ENCODE measurements at regions of chr11 and their contacts with region 1.

Region 1: GRCh38 chr11:114295676-114296604 is at the start of gene NNMT:
- DNase-seq: peak in 1 of 2 donors; percentile 93
- H3K4me3 ChIP-seq: peak within 1 kb of the TSS; percentile 47 to 76
- H3K27ac ChIP-seq: peak within 1 kb of the TSS; percentile 97 to 99
- H3K4me1 ChIP-seq: peaks cover 3 to 33% of the 10 kb centered on the region in 2 donors
- H3K27me3 ChIP-seq: no peaks in the 10 kb centered on the region
- CTCF ChIP-seq: no peak
- total RNA-seq, gene NNMT: 1,040 TPM

Region 2: GRCh38 chr11:114036156-114036811 is 259.7 kb before region 1 on chr11:
- intact Hi-C with region 1: no loop called
- DNase-seq: peak; percentile 27 to 88
- H3K4me3 ChIP-seq: peak overlapping the region; percentile 57 to 59
- H3K27ac ChIP-seq: peak overlapping the region; percentile 77 to 87
- H3K4me1 ChIP-seq: peaks cover 0 to 26% of the 10 kb centered on the region in 2 donors
- H3K27me3 ChIP-seq: no peaks in the 10 kb centered on the region
- CTCF ChIP-seq: peak; percentile 88 to 91 (median 90)

Region 3: DNA sequence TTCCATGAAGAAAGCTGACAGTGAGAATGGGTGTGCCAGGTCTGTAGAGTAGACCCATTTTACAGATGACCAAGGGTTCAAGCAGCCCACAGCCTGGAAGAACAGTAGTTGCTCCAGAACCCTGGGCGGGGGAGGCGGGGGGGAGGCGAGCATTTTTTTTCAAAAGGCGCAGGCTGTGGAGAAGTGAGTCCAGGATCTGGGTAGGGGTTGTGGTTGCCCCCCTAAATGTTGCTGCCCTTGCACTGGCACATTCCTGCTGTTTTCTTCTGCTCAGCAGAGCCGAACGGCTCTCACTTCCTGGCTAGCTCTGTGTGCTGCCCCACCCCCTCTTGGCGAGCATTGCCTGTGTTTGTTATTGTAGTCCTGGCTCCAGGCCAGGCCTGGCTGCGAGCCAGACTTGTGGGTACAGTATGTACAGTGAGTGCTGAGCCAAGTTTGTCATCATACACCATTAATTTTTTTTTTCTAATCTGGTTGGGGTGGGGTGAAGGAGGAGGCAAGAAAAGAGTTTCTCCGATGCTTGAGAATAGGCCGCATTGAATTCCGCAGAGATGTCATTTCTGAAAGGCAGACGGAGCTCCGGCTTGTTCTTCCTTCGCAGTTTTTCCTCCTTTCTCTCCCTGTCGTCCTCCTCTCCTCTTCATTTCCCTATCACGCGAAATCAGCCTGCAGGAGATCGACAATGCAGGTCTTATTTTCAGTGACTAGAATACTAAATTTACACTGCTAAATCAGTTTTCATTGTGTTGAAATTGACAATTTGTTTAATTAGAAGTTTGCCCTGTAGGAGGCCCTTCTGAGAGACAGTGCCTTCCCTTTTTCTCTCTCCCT is 135.9 kb before region 1 on chr11:
- intact Hi-C with region 1: loop called (anchors 5 kb)
- DNase-seq: peak; percentile 98 to 100
- H3K4me3 ChIP-seq: peak overlapping the region; percentile 44 to 48
- H3K27ac ChIP-seq: peak overlapping the region; percentile 92 to 99
- H3K4me1 ChIP-seq: peaks cover 58 to 93% of the 10 kb centered on the region in 2 donors
- H3K27me3 ChIP-seq: no peaks in the 10 kb centered on the region
- CTCF ChIP-seq: no peak

Region 4: GRCh38 chr11:114243461-114244372 is 52.2 kb before region 1 on chr11:
- intact Hi-C with region 1: no loop called
- DNase-seq: no peak
- H3K4me3 ChIP-seq: no peak overlapping the region
- H3K27ac ChIP-seq: peak overlapping the region; percentile 47 to 53
- H3K4me1 ChIP-seq: peaks cover 0 to 32% of the 10 kb centered on the region in 2 donors
- H3K27me3 ChIP-seq: no peaks in the 10 kb centered on the region
- CTCF ChIP-seq: no peak

Region 5: DNA sequence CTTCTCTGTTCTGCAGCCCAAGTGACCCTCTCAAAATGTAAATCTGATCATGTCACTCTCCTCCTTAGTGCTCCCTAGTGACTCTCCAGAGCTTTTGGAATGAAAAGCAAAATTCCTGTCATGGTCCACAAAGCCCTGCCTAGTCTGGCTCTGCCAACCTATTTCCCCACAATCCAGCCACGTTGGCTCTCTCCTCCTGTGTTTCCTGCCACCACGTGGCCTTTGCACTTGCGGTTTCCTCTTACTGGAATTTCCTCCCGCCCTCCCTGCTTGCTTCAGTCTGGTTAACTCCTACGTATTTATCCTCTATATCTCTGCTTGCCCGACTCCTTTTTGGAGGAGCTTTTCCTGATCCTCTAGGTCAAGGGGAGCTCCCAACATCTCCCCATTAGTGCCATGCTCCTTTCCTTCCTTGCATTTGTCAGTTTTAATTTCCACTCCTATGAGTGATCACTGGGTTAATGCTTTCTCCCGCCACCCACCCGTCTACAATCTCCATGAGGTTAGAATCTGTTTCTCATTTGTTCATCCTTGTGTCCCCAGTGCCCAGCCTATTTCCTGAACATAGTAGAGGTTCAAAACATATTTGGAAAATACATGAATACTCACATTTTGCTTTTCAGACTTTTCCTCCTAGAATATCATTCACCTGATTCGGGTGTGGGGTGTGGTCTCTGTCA is 11.7 kb after region 1 on chr11:
- intact Hi-C with region 1: loop called (anchors 1 kb)
- DNase-seq: peak; percentile 56 to 92
- H3K4me3 ChIP-seq: peak overlapping the region; percentile 34 to 56
- H3K27ac ChIP-seq: peak overlapping the region; percentile 93
- H3K4me1 ChIP-seq: peaks cover 18 to 66% of the 10 kb centered on the region in 2 donors
- H3K27me3 ChIP-seq: no peaks in the 10 kb centered on the region
- CTCF ChIP-seq: no peak

Region 6: DNA sequence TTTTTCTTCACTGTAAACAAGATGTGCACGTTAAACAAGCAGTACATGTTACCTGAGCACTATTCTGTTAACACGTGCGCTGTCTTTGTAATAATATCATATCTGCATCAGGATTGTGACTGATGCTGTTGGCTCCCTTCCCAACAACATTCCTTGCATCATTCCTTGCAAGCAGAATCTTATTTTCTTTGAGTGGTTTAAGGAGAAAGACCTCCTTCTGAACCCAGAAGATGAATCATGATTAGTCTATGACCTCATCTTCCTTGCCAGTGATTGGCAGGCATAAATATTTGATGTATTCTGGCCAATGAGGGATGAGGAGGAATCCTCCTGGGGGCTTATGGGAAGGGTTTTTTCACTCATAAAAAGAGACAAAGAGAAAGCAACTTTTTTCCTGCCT is 58.1 kb after region 1 on chr11:
- intact Hi-C with region 1: no loop called
- DNase-seq: no peak
- H3K4me3 ChIP-seq: no peak overlapping the region
- H3K27ac ChIP-seq: no peak overlapping the region
- H3K4me1 ChIP-seq: no peaks in the 10 kb centered on the region
- H3K27me3 ChIP-seq: no peaks in the 10 kb centered on the region
- CTCF ChIP-seq: no peak